Activated CD8-positive, alpha-beta T cell treated with anti-CD3 and anti-CD28 coated beads for 36 hours (primary cell): ENCODE measurements at regions of chr5 and their contacts with region 1.

Region 1: GRCh38 chr5:59126708-59127573 is 544.1 kb downstream of the RAB3C start:
- DNase-seq: no peak
- ATAC-seq: peak; percentile 11
- H3K4me3 Mint-ChIP-seq: no peak overlapping the region
- H3K27ac Mint-ChIP-seq: no peak overlapping the region
- H3K4me1 Mint-ChIP-seq: peaks cover 33% of the 10 kb centered on the region
- H3K27me3 Mint-ChIP-seq: no peaks in the 10 kb centered on the region
- CTCF ChIP-seq: no peak

Region 2: GRCh38 chr5:59099270-59099994 is 27.5 kb before region 1 on chr5:
- CTCF ChIA-PET with region 1: interaction called, 15 read pairs
- POLR2A ChIA-PET with region 1: interaction called, 6 read pairs
- intact Hi-C with region 1: loop called (anchors 2 kb)
- DNase-seq: peak; percentile 75
- ATAC-seq: peak; percentile 94
- H3K4me3 Mint-ChIP-seq: peak overlapping the region; percentile 11
- H3K27ac Mint-ChIP-seq: peak overlapping the region; percentile 74
- H3K4me1 Mint-ChIP-seq: peaks cover 39% of the 10 kb centered on the region
- H3K27me3 Mint-ChIP-seq: no peaks in the 10 kb centered on the region
- CTCF ChIP-seq: no peak

Region 3: DNA sequence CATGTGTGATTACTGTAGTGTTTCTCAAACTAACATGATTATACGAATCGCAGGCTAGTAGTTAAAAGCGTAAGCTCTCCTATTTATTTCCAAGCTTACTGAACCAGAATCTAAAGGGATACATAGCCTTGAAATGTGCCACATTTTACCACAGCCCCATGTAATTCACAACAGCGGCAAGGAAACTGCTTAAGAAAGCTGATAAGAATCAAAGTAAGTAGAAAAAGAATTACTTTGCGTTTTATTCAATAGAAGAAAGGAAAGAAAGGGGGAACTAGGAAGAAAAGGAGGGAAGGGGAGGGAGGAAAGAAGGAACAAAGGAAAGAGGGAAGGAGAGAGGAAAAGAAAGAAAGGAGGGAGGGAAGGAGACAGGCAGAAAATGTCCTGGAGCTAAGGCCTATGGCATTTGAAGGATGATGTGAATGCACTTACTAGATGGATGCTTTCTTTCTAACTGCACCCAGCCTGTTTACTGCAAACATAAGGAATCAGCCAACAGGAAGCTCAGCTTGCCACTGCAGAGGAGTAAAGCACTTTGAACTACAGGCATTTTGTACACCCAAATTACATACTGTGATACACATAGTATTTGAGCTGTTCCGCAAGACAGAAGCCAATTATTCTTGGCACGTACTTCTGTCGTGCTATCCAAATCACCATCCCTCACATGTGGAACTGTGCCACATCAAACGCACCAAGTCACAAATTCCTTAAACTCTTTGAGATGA is 22.4 kb before region 1 on chr5:
- CTCF ChIA-PET with region 1: interaction called, 15 read pairs
- POLR2A ChIA-PET with region 1: interaction called, 6 read pairs
- intact Hi-C with region 1: loop called (anchors 2 kb)
- DNase-seq: no peak
- ATAC-seq: no peak
- H3K4me3 Mint-ChIP-seq: no peak overlapping the region
- H3K27ac Mint-ChIP-seq: no peak overlapping the region
- H3K4me1 Mint-ChIP-seq: peaks cover 29% of the 10 kb centered on the region
- H3K27me3 Mint-ChIP-seq: no peaks in the 10 kb centered on the region
- CTCF ChIP-seq: no peak

Region 4: DNA sequence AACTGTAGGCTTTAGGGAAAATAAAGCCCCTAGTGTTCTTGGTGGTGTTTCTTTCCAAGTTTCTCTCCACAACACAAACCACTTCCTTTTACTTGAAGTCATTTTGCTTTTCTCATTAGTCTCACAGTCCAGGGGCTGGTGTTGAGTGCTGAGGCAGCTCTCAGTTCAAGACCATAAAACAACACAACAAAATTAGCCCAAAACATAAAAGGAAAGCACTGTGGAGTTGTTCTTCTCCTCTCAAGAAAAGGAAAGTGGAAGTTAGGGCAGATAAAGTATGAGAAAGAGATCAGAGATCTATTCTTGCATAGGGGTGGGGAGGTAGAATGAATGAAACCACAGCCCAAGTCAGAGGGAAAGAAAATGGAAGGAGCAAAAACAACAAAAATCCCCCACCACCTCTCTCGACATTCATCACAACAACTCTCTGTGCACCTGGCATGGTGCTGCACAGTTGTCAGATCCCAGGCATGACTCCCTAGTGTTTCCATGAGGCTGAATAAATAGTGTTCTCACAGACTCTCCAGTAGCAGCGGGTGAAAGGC is 25.8 kb after region 1 on chr5:
- CTCF ChIA-PET with region 1: interaction called, 7 read pairs
- POLR2A ChIA-PET with region 1: interaction called, 11 read pairs
- intact Hi-C with region 1: no loop called
- DNase-seq: peak; percentile 14
- ATAC-seq: peak; percentile 72
- H3K4me3 Mint-ChIP-seq: no peak overlapping the region
- H3K27ac Mint-ChIP-seq: no peak overlapping the region
- H3K4me1 Mint-ChIP-seq: peaks cover 6% of the 10 kb centered on the region
- H3K27me3 Mint-ChIP-seq: no peaks in the 10 kb centered on the region
- CTCF ChIP-seq: no peak